GM12878 (cell line): ENCODE measurements at regions of chr17 and their contacts with region 1.

Region 1: DNA sequence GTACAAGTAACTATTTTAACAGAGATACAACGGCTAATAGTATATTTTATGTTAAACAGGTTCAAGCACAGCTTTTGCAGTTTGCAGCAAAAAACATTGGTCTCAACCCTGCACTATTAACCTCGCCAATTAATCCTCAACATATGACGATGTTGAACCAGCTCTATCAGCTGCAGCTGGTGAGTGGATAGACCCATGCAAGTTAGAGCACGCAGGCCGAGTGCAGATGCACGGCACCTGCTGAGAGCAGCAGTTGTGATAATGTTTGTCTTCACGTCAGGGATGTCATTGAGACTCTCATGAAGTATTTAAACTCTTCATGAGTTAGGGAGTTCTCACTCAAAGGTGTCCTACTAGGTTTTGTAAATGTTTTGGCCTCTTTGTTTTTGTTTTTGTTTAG is 45.6 kb downstream of the TMC6 start:
- DNase-seq: no peak
- ATAC-seq: no peak
- H3K4me3 ChIP-seq: no peak overlapping the region
- H3K27ac ChIP-seq: no peak overlapping the region
- H3K4me1 ChIP-seq: no peaks in the 10 kb centered on the region
- H3K27me3 ChIP-seq: no peaks in the 10 kb centered on the region
- CTCF ChIP-seq: no peak
- EP300 ChIP-seq: no peak
- POLR2A ChIP-seq: no peak
- RAD21 ChIP-seq: no peak

Region 2: GRCh38 chr17:78040440-78041385 is 42.3 kb before region 1 on chr17:
- CTCF ChIA-PET with region 1: interaction called, 23 read pairs
- POLR2A ChIA-PET with region 1: interaction called, 5 read pairs
- RAD21 ChIA-PET with region 1: interaction called, 16 read pairs
- SMC1A ChIA-PET with region 1: interaction called, 5 read pairs
- in situ Hi-C with region 1: no loop called
- intact Hi-C with region 1: no loop called
- DNase-seq: peak; percentile 21
- ATAC-seq: peak; percentile 99
- H3K4me3 ChIP-seq: peak overlapping the region; percentile 57; the same call in 1 of the 2 replicates
- H3K27ac ChIP-seq: peak overlapping the region; percentile 34; the same call in 1 of the 2 replicates
- H3K4me1 ChIP-seq: no peaks in the 10 kb centered on the region
- H3K27me3 ChIP-seq: no peaks in the 10 kb centered on the region
- CTCF ChIP-seq: peak in 1 of 3 experiments; percentile 25; a peak in 2 of 6 replicates
- EP300 ChIP-seq: no peak
- POLR2A ChIP-seq: no peak
- RAD21 ChIP-seq: no peak

Region 3: GRCh38 chr17:78096093-78096492 is 13.1 kb after region 1 on chr17:
- CTCF ChIA-PET with region 1: interaction called, 16 read pairs
- POLR2A ChIA-PET with region 1: no interaction called
- RAD21 ChIA-PET with region 1: interaction called, 9 read pairs
- SMC1A ChIA-PET with region 1: interaction called, 7 read pairs
- in situ Hi-C with region 1: no loop called
- intact Hi-C with region 1: no loop called
- DNase-seq: no peak
- ATAC-seq: no peak
- H3K4me3 ChIP-seq: no peak overlapping the region
- H3K27ac ChIP-seq: no peak overlapping the region
- H3K4me1 ChIP-seq: no peaks in the 10 kb centered on the region
- H3K27me3 ChIP-seq: no peaks in the 10 kb centered on the region
- CTCF ChIP-seq: no peak
- EP300 ChIP-seq: no peak
- POLR2A ChIP-seq: no peak
- RAD21 ChIP-seq: no peak

Region 4: DNA sequence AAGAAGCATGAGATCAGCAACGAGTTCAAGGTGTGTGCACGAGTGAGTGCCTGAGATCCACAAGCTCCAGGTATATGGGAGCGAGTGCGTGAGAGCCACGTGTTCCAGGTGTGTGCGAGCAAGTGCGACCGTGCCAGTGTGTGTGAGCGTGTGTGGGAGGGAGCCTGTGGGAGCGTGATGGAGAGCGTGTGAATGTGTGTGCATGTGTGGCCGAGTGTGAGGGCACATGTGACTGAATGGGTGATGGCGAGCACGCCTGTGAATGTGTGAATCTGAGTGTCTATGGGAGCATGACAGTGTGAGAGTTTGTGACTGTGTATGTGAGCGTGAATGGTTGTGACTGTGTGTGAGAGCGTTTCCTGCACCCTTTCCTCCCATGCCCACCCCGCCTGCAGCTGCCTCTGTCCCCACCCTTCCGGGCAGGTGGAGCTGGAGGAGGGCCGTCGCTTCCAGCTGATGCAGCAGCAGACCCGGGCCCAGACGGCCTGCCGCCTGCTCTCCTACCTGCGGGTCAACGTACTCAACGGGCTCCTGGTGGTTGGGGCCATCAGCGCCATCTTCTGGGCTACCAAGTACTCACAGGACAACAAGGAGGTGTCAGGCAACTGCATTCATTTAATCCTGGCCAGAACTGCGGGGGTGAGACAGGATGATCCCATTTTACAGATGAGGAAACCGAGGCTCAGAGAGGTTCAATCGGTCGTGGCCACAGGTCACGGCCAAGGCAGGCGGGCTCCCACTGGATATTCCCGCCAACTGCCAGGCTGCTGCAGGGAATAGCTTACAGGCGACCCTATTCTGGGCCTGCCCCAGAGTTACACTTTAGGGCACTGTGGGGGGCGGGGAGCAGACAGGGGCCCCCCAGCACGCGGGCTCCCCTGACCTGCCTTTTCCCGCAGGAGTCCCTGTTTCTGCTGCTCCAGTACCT is 51.2 kb after region 1 on chr17:
- CTCF ChIA-PET with region 1: interaction called, 11 read pairs
- POLR2A ChIA-PET with region 1: no interaction called
- RAD21 ChIA-PET with region 1: interaction called, 3 read pairs
- SMC1A ChIA-PET with region 1: interaction called, 7 read pairs
- in situ Hi-C with region 1: no loop called
- intact Hi-C with region 1: no loop called
- DNase-seq: no peak
- ATAC-seq: peak; percentile 34
- H3K4me3 ChIP-seq: peak overlapping the region; percentile 94
- H3K27ac ChIP-seq: peak overlapping the region; percentile 93
- H3K4me1 ChIP-seq: peaks cover 64% of the 10 kb centered on the region
- H3K27me3 ChIP-seq: no peaks in the 10 kb centered on the region
- CTCF ChIP-seq: peak; percentile 76 to 78 (median 76)
- EP300 ChIP-seq: peak in 1 of 2 experiments; percentile 58; a peak in 1 of 4 replicates
- POLR2A ChIP-seq: peak; percentile 76
- RAD21 ChIP-seq: peak; percentile 75

Region 5: DNA sequence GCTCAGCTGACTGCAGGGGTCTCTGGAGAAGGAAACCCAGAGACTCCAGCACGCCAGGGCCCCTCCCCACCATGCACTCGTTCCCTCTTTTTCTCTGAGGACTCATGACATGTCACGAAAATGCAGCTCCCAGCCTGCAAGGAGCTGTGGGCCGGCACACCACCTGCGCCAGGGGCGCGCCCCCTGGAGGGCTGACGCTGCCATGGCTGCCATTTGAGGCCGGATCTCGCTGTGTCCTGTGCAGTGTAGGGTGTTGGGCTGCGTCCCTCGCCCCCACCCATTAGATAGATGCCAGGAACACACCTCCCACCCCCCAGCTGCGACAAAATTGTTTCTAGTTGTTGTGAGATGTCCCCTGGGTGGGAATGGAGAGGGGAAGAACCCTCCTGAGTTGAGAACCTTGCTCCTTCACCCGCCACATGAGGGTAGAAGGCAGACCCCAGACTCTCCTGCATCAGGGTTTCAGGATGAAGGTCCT is 93.6 kb after region 1 on chr17:
- CTCF ChIA-PET with region 1: interaction called, 49 read pairs
- POLR2A ChIA-PET with region 1: no interaction called
- RAD21 ChIA-PET with region 1: interaction called, 25 read pairs
- SMC1A ChIA-PET with region 1: interaction called, 8 read pairs
- in situ Hi-C with region 1: no loop called
- intact Hi-C with region 1: loop called (anchors 1 kb)
- DNase-seq: no peak
- ATAC-seq: peak; percentile 68
- H3K4me3 ChIP-seq: no peak overlapping the region
- H3K27ac ChIP-seq: no peak overlapping the region
- H3K4me1 ChIP-seq: peaks cover 59% of the 10 kb centered on the region
- H3K27me3 ChIP-seq: no peaks in the 10 kb centered on the region
- CTCF ChIP-seq: peak; percentile 94 to 99 (median 99); a peak in 5 of 6 replicates
- EP300 ChIP-seq: no peak
- POLR2A ChIP-seq: peak; percentile 75
- RAD21 ChIP-seq: peak; percentile 82

Region 6: GRCh38 chr17:78250891-78251794 is 168.2 kb after region 1 on chr17:
- CTCF ChIA-PET with region 1: interaction called, 82 read pairs
- POLR2A ChIA-PET with region 1: no interaction called
- RAD21 ChIA-PET with region 1: interaction called, 76 read pairs
- SMC1A ChIA-PET with region 1: interaction called, 47 read pairs
- in situ Hi-C with region 1: no loop called
- intact Hi-C with region 1: loop called (anchors 2 kb)
- DNase-seq: no peak
- ATAC-seq: peak; percentile 87
- H3K4me3 ChIP-seq: no peak overlapping the region
- H3K27ac ChIP-seq: no peak overlapping the region
- H3K4me1 ChIP-seq: peaks cover 29% of the 10 kb centered on the region
- H3K27me3 ChIP-seq: no peaks in the 10 kb centered on the region; a peak in 1 of 4 replicates
- CTCF ChIP-seq: peak; percentile 99 to 100 (median 99)
- EP300 ChIP-seq: no peak
- POLR2A ChIP-seq: no peak
- RAD21 ChIP-seq: peak; percentile 83